PC-9 (cell line): ENCODE measurements at regions of chr1 and their contacts with region 1.

Region 1: GRCh38 chr1:6880951-6881690 is 95.9 kb downstream of the CAMTA1 start:
- DNase-seq: no peak
- H3K4me3 ChIP-seq: no peak overlapping the region
- H3K27ac ChIP-seq: no peak overlapping the region
- H3K4me1 ChIP-seq: no peaks in the 10 kb centered on the region
- H3K27me3 ChIP-seq: no peaks in the 10 kb centered on the region
- CTCF ChIP-seq: no peak

Region 2: DNA sequence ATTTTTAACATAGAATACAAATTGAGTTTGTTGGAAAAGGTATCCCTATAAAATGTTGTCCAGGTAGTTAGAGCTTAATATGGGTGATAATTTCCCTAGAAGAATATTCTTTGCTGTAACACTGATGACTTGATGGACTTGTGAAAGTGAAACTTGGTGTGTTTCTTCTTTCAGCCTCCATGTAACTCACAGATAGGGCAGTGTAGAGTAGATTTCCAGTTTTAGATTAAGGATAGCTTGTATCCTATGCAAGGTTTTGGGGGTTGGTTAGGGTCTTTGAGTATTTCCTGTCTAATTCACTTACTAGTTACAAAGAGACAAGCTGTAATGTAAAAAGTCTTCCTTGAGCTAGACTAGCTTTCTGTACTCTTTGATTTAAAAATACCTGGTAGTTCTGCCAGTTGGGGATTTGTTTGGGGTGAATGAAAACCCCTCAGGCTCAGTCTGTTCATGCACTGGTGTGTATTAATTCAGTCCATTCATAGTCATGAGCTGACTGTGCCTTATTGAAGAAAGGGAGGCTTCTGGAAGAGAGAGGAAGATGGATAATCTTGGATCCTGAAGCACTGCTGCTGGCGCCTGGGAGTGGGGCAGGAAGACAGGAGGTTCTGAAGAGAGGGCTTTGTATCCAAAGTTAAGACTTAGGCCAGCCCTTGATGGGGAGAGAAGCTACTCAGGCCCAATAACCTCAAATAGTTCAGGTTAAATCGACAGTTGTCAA is 12.3 kb before region 1 on chr1:
- CTCF ChIA-PET with region 1: no interaction called
- POLR2A ChIA-PET with region 1: interaction called, 19 read pairs
- intact Hi-C with region 1: no loop called
- DNase-seq: no peak
- H3K4me3 ChIP-seq: no peak overlapping the region
- H3K27ac ChIP-seq: no peak overlapping the region
- H3K4me1 ChIP-seq: no peaks in the 10 kb centered on the region
- H3K27me3 ChIP-seq: no peaks in the 10 kb centered on the region
- CTCF ChIP-seq: no peak

Region 3: GRCh38 chr1:7539769-7540175 is 658.7 kb after region 1 on chr1:
- CTCF ChIA-PET with region 1: no interaction called
- POLR2A ChIA-PET with region 1: no interaction called
- intact Hi-C with region 1: no loop called
- DNase-seq: peak; percentile 44 to 65
- H3K4me3 ChIP-seq: no peak overlapping the region
- H3K27ac ChIP-seq: no peak overlapping the region
- H3K4me1 ChIP-seq: no peaks in the 10 kb centered on the region
- H3K27me3 ChIP-seq: peaks cover 57% of the 10 kb centered on the region
- CTCF ChIP-seq: peak; percentile 26; the same call in 1 of the 2 replicates